GM10248 (cell line): ENCODE measurements at regions of chr19 and their contacts with region 1.

Region 1: DNA sequence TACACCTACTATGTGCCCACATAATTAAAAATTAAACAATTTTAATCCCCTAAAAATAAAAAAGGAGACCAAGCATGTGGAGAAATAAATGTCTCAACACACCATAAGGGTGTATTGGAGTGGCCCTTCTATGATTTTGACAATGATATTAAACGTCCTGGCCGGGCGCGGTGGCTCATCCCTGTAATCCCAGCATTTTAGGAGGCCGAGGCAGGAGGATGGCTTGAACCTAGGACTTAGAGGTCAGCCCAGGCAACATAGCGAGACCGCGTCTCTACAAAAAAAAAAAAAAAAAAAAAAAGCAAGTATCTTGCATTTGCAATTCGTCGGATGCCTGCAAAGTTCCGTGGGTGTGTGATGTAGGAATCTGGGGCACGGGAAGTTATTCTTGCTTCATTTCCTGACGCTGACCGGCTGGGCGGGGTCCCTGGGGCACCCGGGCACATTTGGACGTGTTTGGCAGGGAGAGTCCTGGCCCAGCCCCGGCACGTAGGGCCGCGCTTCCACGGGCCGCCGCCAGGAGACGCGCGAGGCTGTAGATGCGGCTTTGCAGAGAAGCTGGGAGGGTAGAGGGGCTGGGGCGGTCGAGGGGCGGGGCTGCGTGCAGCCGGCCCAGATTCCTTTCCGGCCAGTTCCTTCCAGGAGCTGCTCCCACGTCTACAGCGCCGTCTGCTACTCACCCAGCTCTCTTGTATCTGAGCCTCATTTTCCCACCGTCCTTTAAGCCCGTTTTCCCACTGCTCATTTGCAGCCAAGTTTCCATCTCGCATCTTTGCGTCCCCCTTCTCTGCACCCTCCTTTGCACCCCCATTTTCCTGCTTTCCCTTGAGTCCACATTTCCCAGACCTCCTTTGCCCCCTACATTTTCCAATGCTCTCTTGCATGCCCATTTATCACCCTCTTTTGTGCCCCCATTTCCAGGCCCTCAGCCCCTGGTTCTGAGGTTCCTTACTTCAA is 2.2 kb upstream of the TSPAN16 start:
- DNase-seq: peak; percentile 91
- CTCF ChIP-seq: peak; percentile 99

Region 2: DNA sequence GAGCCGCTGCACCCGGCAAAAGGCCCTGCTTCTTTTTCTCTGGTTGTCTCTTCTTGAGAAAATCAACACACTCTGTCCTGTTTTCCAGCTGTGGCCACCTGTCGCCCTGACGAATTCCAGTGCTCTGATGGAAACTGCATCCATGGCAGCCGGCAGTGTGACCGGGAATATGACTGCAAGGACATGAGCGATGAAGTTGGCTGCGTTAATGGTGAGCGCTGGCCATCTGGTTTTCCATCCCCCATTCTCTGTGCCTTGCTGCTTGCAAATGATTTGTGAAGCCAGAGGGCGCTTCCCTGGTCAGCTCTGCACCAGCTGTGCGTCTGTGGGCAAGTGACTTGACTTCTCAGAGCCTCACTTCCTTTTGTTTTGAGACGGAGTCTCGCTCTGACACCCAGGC is 187.2 kb before region 1 on chr19:
- CTCF ChIA-PET with region 1: no interaction called
- POLR2A ChIA-PET with region 1: no interaction called
- DNase-seq: no peak
- CTCF ChIP-seq: no peak

Region 3: DNA sequence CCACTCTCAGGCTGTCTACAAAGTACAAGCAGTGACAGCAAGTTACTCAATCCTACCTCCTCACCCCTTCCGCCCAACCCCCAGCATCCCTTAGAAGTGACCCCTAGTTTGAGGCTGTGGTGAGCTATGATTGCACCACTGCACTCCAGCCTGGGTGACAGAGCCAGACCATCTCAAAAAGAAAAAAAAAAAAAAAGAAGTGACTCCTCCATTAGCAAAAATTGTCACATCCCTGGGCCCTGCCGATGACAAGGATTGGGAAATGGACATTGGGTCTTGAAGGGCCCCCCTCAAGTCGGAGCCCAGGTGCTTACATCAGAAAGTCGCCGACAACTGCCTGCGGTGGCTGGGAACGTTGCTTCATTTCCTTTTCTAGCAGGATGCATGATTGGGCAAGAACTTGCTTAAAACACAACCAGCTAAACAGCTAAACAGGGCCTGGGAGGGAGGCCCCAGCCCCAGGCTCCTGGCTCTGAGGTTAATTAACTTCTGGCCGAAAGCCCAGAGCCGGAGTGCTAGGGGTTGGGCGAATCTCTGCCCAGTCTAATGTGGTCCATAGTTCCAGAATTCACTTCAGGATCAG is 30.5 kb after region 1 on chr19:
- CTCF ChIA-PET with region 1: interaction called, 10 read pairs
- POLR2A ChIA-PET with region 1: no interaction called
- DNase-seq: peak; percentile 70
- CTCF ChIP-seq: no peak